WTC11 (cell line): ENCODE measurements at regions of chr19 and their contacts with region 1.

Region 1: DNA sequence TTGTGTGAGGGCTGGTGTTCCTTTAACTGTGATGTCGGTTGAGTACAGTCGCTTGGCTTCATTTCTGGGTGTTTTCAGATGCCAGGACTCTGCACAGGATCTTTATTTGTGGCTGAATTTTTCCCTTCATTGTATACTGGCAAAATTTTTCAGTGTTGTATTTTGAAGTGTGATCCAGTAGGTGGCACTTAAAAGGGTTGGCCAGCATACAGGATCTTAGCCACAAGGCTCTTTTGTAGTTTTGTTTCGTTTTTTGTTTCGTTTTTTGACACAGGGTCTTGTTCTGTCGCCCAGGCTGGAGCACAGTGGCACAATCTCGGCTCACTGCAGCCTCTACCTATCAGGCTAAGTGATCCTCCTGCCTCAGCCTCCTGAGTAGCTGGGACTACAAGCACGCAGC is 8.7 kb downstream of the FCAR start:
- DNase-seq: no peak
- ATAC-seq: no peak
- H3K4me3 Mint-ChIP-seq: no peak overlapping the region
- H3K27ac Mint-ChIP-seq: no peak overlapping the region
- H3K4me1 Mint-ChIP-seq: peaks cover 26% of the 10 kb centered on the region
- H3K27me3 Mint-ChIP-seq: peaks cover 18% of the 10 kb centered on the region
- CTCF ChIP-seq: no peak

Region 2: GRCh38 chr19:54674021-54674617 is 208.6 kb before region 1 on chr19:
- CTCF ChIA-PET with region 1: interaction called, 17 read pairs
- POLR2A ChIA-PET with region 1: no interaction called
- DNase-seq: no peak
- ATAC-seq: no peak
- H3K4me3 Mint-ChIP-seq: no peak overlapping the region
- H3K27ac Mint-ChIP-seq: no peak overlapping the region
- H3K4me1 Mint-ChIP-seq: peaks cover 2% of the 10 kb centered on the region; the same call in 1 of the 2 replicates
- H3K27me3 Mint-ChIP-seq: no peaks in the 10 kb centered on the region; the same call in 1 of the 2 replicates
- CTCF ChIP-seq: peak; percentile 46; the same call in 1 of the 2 replicates

Region 3: DNA sequence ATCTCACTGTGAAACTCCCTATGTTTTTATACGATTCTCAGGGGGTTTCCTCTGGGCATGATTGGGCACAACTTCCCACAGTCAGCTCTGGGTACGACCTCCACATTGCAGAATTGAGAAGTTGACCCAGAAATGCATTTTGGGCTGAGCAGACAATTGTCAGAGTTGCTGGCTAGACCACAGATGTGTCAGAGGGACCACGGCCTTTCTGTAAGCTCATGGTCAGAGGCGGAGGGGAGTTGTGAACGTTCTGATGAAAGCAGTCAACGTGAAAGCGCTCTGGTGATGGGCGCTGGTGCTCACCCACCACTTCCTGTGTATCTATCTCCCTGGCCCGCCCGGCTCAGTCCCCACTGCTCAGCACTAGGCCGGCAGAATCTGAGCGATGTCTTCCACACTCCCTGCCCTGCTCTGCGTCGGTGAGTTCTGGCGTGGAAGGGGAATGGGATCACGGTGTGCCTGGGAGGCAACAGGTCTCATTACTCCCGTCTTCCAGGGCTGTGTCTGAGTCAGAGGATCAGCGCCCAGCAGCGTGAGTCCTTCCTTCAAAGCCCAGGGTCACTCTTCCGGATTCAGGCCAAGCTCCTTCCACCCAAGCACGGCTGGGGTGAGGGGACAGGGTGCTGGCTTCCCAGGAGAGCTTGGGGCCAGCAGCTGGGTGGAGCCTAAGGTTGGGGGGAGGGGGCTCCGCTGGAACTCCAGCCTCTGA is 23.2 kb after region 1 on chr19 and contains the start of gene NCR1:
- CTCF ChIA-PET with region 1: interaction called, 16 read pairs
- POLR2A ChIA-PET with region 1: no interaction called
- DNase-seq: no peak
- ATAC-seq: peak; percentile 75
- H3K4me3 Mint-ChIP-seq: peak within 1 kb of the TSS; percentile 24; the same call in 1 of the 2 replicates
- H3K27ac Mint-ChIP-seq: peak within 1 kb of the TSS; percentile 87
- H3K4me1 Mint-ChIP-seq: peaks cover 32% of the 10 kb centered on the region
- H3K27me3 Mint-ChIP-seq: no peaks in the 10 kb centered on the region; the same call in 1 of the 2 replicates
- CTCF ChIP-seq: no peak
- total RNA-seq, gene NCR1: 4.3 to 7.9 TPM (median 7.2 TPM) in 3 replicates

Region 4: DNA sequence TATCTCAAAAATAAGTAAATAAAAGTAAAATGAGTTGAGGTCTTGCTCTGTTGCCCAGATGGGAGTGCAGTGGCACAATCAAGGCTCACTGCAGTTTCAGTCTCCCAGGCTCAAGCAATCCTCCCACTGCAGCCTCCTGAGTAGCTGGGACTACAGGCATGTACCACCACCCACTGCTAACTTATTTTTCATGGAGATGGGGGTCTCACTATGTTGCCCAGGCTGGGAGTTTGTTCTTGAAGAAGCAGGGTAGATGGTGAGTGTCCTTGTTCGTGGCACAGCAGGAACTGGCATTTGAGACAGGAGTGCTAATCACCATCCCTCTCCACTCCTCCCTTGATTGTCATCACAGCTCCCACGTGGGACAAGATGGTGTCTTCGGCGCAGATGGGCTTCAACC is 86.9 kb after region 1 on chr19:
- CTCF ChIA-PET with region 1: interaction called, 10 read pairs
- POLR2A ChIA-PET with region 1: no interaction called
- DNase-seq: no peak
- ATAC-seq: no peak
- H3K4me3 Mint-ChIP-seq: no peak overlapping the region
- H3K27ac Mint-ChIP-seq: no peak overlapping the region
- H3K4me1 Mint-ChIP-seq: 0 out of 2 replicates have a peak, but pooled peaks cover 6% of the 10 kb centered on the region
- H3K27me3 Mint-ChIP-seq: no peaks in the 10 kb centered on the region; the same call in 1 of the 2 replicates
- CTCF ChIP-seq: no peak

Region 5: DNA sequence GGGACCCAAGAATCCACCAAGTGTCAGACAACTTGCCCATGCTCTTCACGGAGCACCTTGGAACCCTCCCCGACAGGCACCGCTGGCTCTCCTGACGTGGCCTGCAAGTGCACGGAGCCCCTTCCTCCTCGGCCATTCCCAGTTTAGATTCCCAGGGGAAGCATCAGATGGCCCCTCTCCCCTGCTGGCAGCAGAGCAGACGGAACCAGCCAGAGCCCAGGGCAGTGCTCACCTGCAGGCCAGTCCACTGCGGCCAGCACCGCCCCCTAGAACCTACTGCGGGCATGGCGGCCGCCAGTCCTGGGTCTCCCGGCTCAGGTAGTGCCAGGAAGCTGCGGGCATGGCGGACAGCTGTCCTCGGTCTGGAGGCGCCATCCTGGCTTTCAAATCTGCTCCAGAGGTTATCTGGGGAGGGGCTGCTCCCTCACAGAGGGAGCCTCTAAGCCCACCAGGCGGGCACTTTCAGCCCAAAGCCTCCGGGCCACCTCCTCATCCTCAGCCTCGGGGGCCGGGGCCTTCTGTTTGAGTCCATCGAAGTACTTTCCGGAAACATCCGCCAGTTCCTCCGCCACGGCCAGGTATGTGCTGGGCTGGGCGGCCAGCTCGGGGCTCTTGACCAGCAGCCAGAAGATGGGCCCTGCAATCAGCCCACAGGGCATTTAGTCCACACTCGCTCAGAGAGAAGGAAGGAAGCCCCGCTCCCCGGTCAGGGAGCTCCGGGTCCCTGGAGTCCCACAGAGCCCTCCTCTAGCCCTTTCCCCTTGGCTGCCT is 162.1 kb after region 1 on chr19:
- CTCF ChIA-PET with region 1: interaction called, 18 read pairs
- POLR2A ChIA-PET with region 1: interaction called, 3 read pairs
- DNase-seq: peak; percentile 27
- ATAC-seq: no peak
- H3K4me3 Mint-ChIP-seq: no peak overlapping the region
- H3K27ac Mint-ChIP-seq: no peak overlapping the region
- H3K4me1 Mint-ChIP-seq: no peaks in the 10 kb centered on the region
- H3K27me3 Mint-ChIP-seq: no peaks in the 10 kb centered on the region
- CTCF ChIP-seq: no peak

Region 6: DNA sequence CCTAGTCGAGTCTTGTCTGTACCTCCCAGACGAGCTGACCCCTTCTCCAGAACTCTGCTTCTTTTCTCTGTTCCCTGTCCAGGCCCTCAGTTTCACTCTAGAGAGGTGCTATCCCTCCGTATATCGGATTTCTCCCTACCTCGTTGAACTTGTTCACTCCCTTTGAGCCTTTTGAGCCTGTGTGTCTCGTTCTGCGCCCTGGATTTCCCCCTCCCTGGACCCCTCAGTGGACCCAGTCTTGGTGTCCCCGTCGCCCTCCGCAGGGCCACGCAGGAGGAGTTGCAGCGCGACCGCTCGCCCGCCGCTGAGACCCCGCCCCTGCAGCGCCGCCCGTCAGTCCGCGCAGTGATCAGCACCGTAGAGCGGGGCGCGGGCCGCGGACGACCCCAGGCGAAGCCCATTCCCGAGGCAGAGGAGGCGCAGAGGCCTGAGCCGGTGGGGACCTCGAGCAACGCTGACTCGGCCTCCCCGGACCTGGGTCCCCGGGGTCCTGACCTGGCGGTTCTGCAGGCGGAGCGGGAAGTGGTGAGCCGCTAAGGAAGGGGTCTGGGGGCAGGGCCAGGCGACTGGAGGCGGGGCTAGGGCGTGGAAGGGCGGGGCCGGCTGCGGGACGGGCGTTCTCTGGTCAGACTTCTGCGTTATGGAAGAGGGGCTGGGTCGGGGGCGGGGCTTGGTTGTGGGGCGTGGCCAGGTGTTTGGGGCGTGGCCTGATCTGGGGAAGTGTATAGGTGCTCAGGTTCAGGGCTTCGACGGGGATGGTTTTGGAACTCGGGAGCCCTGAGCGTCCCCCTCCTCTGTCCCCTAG is 198.4 kb after region 1 on chr19:
- CTCF ChIA-PET with region 1: interaction called, 12 read pairs
- POLR2A ChIA-PET with region 1: interaction called, 3 read pairs
- DNase-seq: peak; percentile 98
- ATAC-seq: peak; percentile 67
- H3K4me3 Mint-ChIP-seq: peak overlapping the region; percentile 96
- H3K27ac Mint-ChIP-seq: peak overlapping the region; percentile 98
- H3K4me1 Mint-ChIP-seq: peaks cover 48% of the 10 kb centered on the region
- H3K27me3 Mint-ChIP-seq: peaks cover 79% of the 10 kb centered on the region
- CTCF ChIP-seq: no peak

Region 7: DNA sequence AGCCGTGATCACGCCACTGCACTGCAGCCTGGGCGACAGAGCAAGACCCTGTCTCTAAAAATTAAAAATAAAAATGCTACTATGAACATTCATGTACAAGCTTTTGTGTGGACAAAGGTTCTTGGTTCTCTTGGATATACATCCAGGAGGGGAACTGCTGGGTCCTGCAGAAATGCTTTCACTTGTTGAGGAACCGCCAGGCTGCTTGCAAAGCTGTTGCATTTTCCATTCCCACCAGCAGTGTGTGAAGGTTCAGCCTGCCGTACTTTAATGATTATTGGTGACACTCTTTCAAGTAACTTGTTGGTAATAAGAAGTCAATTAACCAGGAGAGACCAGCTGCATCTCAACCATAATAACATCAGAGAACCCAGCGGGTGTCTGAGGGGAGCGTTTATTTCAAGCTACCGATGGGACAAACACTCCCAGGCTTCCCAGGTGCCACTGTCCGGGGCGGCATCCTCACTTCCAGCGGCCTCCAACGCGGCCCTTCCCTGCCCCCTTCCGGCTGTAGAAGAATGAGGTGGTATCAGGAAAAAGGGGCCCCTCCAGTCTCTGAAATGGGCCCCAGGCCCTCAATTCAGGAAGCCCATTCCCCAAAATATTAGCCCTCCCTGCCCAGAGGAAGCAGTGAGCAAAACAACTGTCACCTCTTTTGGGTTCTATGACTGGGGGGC is 249.8 kb after region 1 on chr19:
- CTCF ChIA-PET with region 1: interaction called, 26 read pairs
- POLR2A ChIA-PET with region 1: no interaction called
- DNase-seq: no peak
- ATAC-seq: peak; percentile 66
- H3K4me3 Mint-ChIP-seq: no peak overlapping the region
- H3K27ac Mint-ChIP-seq: 0 out of 2 replicates have a peak overlapping the region, but pooled peaks have one; percentile 22
- H3K4me1 Mint-ChIP-seq: peaks cover 23% of the 10 kb centered on the region
- H3K27me3 Mint-ChIP-seq: peaks cover 4% of the 10 kb centered on the region
- CTCF ChIP-seq: no peak